ENCODE measurements at regions of chr12 and their contacts with region 1.

Region 1: GRCh38 chr12:47949441-47950308 is 13.7 kb upstream of the TMEM106C start:
- DNase-seq: no peak
- H3K4me3 ChIP-seq: no peak overlapping the region
- H3K27me3 ChIP-seq: no peaks in the 10 kb centered on the region
- CTCF ChIP-seq: peak; percentile 95

Region 2: GRCh38 chr12:47844274-47845019 is 105.2 kb before region 1 on chr12:
- CTCF ChIA-PET with region 1: interaction called, 36 read pairs
- POLR2A ChIA-PET with region 1: no interaction called
- DNase-seq: no peak
- H3K4me3 ChIP-seq: no peak overlapping the region
- H3K27me3 ChIP-seq: no peaks in the 10 kb centered on the region
- CTCF ChIP-seq: no peak

Region 3: DNA sequence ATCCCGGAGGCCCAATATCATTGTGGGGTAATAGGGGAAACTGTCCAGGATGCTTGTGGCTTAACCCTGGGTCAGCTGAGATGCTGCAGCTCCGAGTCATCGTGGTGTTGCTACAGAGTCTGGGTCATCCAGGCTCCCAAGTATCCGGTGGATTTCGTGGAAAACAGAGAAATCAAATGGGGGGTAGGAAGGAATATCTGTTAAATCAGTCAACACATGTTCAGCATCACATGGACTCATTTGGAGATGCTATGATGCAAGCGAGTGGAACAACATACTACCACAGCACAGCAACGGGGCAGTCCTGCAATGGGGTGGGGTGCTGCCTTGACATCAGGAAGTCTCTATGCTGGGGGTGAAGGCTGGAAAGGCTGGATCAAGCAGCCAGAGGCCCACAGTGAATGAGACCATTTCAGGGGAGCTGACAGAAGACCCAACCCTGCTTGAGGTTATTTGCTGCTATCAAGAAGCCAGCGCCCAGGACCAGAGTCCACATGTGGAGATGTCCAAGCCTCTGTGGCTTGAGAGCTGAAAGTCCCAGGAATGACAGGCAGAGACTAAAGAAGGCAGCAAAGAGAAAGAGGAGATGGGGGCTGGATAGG is 67.7 kb before region 1 on chr12:
- CTCF ChIA-PET with region 1: interaction called, 11 read pairs
- POLR2A ChIA-PET with region 1: no interaction called
- DNase-seq: peak; percentile 99
- H3K4me3 ChIP-seq: no peak overlapping the region
- H3K27me3 ChIP-seq: no peaks in the 10 kb centered on the region
- CTCF ChIP-seq: no peak

Region 4: DNA sequence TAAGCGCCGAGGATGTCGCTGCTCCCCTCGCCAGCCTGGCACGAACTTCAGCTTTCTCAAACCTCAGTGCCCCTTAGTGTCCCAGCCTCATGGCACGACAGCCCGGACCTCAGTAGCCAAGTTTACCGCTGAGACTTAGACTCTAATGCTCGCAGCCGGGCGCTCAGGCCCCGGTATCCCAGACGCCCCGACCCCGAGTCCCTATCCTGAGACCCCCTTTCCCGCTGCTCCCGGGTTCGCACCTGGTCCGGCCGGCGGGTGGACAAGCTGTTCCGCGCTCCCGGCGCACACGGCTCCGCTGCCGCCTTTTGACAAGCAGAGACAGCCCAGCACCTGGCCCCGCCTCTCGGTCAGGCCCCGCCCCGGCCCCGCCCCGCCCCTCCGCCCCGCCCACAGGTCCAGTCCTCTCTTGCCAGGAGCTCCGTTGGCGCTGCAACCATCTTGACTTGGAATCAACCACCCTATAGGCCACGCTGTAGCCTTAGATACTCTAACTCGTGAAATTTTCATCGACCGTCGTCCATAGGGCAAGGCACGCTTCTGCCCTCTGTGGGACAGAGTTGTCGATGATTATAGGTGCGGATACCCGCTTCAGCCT is 44.9 kb before region 1 on chr12 and contains the start of gene VDR:
- CTCF ChIA-PET with region 1: interaction called, 30 read pairs
- POLR2A ChIA-PET with region 1: no interaction called
- DNase-seq: no peak
- H3K4me3 ChIP-seq: peak within 1 kb of the TSS; percentile 76
- H3K27me3 ChIP-seq: no peaks in the 10 kb centered on the region; the same call in 1 of the 2 replicates
- CTCF ChIP-seq: peak; percentile 41
- polyA plus RNA-seq, gene VDR: 23.3 and 40.5 TPM in 2 replicates

Region 5: GRCh38 chr12:47920913-47921312 is 28.8 kb before region 1 on chr12:
- CTCF ChIA-PET with region 1: no interaction called
- POLR2A ChIA-PET with region 1: no interaction called
- DNase-seq: no peak
- H3K4me3 ChIP-seq: no peak overlapping the region
- H3K27me3 ChIP-seq: peaks cover 11% of the 10 kb centered on the region
- CTCF ChIP-seq: no peak

Region 6: GRCh38 chr12:47963340-47964040 is 13.8 kb after region 1 on chr12 and contains the start of gene TMEM106C:
- CTCF ChIA-PET with region 1: interaction called, 85 read pairs
- POLR2A ChIA-PET with region 1: no interaction called
- DNase-seq: peak; percentile 31
- H3K4me3 ChIP-seq: peak within 1 kb of the TSS; percentile 93
- H3K27me3 ChIP-seq: peaks cover 4% of the 10 kb centered on the region; the same call in 1 of the 2 replicates
- CTCF ChIP-seq: peak; percentile 100
- polyA plus RNA-seq, gene TMEM106C: 188 and 217 TPM in 2 replicates

Region 7: GRCh38 chr12:48203192-48203591 is 253.5 kb after region 1 on chr12 and contains the start of gene OR10AD1:
- CTCF ChIA-PET with region 1: no interaction called
- POLR2A ChIA-PET with region 1: no interaction called
- DNase-seq: no peak
- H3K4me3 ChIP-seq: no peak within 1 kb of the TSS
- H3K27me3 ChIP-seq: no peaks in the 10 kb centered on the region
- CTCF ChIP-seq: no peak
- polyA plus RNA-seq, gene OR10AD1: not detected in 2 replicates